Activated CD8-positive, alpha-beta T cell treated with anti-CD3 and anti-CD28 coated beads for 36 hours (primary cell): ENCODE measurements at regions of chr17 and their contacts with region 1.

Region 1: DNA sequence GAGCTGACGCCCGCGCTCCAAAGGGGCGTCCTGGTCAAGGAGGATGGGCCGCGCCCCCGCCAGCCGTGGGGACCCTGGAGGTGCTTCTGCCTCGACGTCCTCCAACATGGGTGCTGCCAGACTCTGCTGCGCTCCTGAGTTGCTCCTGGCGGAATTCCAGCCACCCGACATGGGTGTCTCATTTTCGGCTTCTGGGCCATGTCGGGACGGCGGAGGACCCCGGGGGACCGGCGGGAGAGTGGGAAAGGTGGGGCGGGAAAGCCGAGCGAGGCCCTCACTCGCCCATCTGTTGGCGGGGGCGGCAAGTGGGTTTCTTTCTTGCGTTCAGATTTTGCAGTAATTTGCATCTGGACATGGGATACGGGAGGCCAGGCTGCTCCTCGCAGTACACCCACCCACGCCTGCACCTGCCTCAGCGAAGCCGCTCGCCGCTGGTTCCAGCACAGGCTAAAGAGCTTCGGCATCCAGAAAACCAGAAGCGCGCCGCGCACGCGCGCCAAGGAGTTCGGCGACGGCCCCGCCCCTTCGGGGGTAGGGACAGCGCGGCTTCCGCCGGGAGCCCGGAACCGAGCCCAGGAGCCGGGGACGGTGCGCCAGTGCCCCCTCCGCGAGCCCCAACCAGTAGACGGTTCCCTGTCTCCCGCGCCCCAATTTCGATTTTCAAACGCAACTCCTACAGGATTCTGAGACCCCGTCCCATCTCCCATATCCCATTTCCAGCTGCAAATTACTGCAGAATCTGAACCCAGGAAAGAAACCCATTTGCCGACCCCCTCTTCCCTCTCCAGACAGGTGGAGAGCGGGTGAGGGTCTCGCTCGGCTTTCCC is at the start of gene ARMC7:
- DNase-seq: peak; percentile 91
- ATAC-seq: peak; percentile 84
- H3K4me3 Mint-ChIP-seq: peak within 1 kb of the TSS; percentile 87
- H3K27ac Mint-ChIP-seq: peak within 1 kb of the TSS; percentile 90
- H3K4me1 Mint-ChIP-seq: peaks cover 32% of the 10 kb centered on the region
- H3K27me3 Mint-ChIP-seq: no peaks in the 10 kb centered on the region
- CTCF ChIP-seq: no peak
- total RNA-seq, gene ARMC7: 5.4 TPM

Region 2: GRCh38 chr17:75012346-75013091 is 97.1 kb before region 1 on chr17 and contains the start of gene MRPL58:
- CTCF ChIA-PET with region 1: interaction called, 19 read pairs
- POLR2A ChIA-PET with region 1: interaction called, 3 read pairs
- intact Hi-C with region 1: no loop called
- DNase-seq: peak; percentile 90
- ATAC-seq: peak; percentile 95
- H3K4me3 Mint-ChIP-seq: peak within 1 kb of the TSS; percentile 88
- H3K27ac Mint-ChIP-seq: peak within 1 kb of the TSS; percentile 92
- H3K4me1 Mint-ChIP-seq: peaks cover 33% of the 10 kb centered on the region
- H3K27me3 Mint-ChIP-seq: no peaks in the 10 kb centered on the region
- CTCF ChIP-seq: peak; percentile 51
- total RNA-seq, gene MRPL58: 53.6 to 62.4 TPM

Region 3: GRCh38 chr17:75096082-75096625 is 13.5 kb before region 1 on chr17:
- CTCF ChIA-PET with region 1: interaction called, 14 read pairs
- POLR2A ChIA-PET with region 1: interaction called, 4 read pairs
- intact Hi-C with region 1: no loop called
- DNase-seq: no peak
- ATAC-seq: no peak
- H3K4me3 Mint-ChIP-seq: no peak overlapping the region
- H3K27ac Mint-ChIP-seq: no peak overlapping the region
- H3K4me1 Mint-ChIP-seq: no peaks in the 10 kb centered on the region
- H3K27me3 Mint-ChIP-seq: no peaks in the 10 kb centered on the region
- CTCF ChIP-seq: no peak

Region 4: GRCh38 chr17:75153780-75154194 is 44.2 kb after region 1 on chr17:
- CTCF ChIA-PET with region 1: interaction called, 34 read pairs
- POLR2A ChIA-PET with region 1: interaction called, 5 read pairs
- intact Hi-C with region 1: no loop called
- DNase-seq: peak; percentile 51
- ATAC-seq: no peak
- H3K4me3 Mint-ChIP-seq: peak overlapping the region; percentile 94
- H3K27ac Mint-ChIP-seq: peak overlapping the region; percentile 87
- H3K4me1 Mint-ChIP-seq: peaks cover 32% of the 10 kb centered on the region
- H3K27me3 Mint-ChIP-seq: no peaks in the 10 kb centered on the region
- CTCF ChIP-seq: no peak

Region 5: DNA sequence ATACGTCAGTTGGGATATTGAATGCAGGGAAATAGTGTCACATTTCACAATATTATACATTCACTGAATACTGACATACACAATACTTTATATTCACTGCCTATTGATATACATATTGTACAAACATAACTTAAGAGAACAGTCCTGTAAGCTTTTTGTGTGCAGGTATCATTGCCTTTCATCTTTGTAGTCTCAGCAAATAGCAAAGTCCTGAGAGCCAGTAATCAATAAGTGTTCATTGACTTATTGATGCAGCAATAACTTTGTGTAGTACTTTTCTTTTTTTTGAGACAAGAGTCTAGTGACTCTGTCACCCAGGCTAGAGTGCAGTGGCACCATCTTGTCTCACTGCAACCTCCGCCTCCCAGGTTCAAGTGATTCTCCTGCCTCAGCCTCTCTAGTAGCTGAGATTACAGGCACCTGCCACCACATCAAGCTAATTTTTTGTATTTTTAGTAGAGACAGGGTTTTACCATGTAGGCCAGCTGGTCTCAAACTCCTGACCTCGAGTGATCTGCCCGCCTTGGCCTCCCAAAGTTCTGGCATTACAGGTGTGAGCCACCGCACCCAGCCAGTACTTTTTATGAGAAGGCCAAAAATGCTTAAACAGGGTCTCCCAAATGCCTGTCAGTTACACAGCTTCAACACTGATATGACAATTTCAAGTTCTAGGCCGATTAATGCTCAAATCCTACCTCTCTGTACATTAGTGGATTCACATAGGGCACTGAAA is 90.4 kb after region 1 on chr17:
- CTCF ChIA-PET with region 1: interaction called, 221 read pairs
- POLR2A ChIA-PET with region 1: interaction called, 8 read pairs
- intact Hi-C with region 1: loop called (anchors 5 kb)
- DNase-seq: no peak
- ATAC-seq: no peak
- H3K4me3 Mint-ChIP-seq: no peak overlapping the region
- H3K27ac Mint-ChIP-seq: no peak overlapping the region
- H3K4me1 Mint-ChIP-seq: peaks cover 10% of the 10 kb centered on the region
- H3K27me3 Mint-ChIP-seq: no peaks in the 10 kb centered on the region
- CTCF ChIP-seq: no peak

Region 6: DNA sequence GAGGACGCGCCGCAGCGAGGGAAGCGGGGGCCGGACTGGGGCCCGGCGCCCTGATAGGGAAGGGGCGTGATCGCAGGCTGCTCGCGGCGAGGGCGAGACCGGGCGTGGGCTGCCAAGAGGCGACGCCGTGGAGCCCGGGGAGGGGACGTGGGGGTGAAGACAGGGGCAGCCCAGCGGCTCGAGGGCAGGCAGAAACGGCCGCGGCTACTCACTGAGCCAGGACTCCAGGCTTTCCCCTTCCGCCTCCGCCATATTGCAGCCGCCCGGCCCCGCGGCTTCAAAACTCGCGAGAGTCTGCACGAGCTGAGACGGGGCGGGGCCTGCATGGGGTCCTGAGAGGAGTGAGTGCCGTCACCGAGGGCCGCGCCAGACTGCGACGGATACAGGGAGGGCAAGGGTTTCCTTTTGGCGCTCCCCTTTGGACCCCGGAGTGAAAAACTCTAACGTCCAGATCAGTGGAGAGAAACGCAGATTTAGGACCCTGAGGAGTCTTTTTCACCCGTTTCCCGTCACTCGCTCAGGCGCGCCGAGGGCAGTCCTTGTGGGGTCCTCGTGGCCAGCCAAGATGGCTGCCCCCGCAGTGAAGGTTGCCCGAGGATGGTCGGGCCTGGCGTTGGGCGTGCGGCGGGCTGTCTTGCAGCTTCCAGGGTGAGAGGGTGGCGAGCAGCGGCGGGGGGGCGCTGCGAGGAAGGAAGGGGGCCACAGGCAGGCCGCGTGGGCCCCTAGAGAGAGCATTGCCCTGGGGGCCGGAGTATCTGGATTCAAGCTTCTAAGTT is 151.9 kb after region 1 on chr17 and contains the starts of genes GGA3 and MRPS7:
- CTCF ChIA-PET with region 1: interaction called, 17 read pairs
- POLR2A ChIA-PET with region 1: interaction called, 6 read pairs
- intact Hi-C with region 1: no loop called
- DNase-seq: peak; percentile 97
- ATAC-seq: peak; percentile 96
- H3K4me3 Mint-ChIP-seq: peak within 1 kb of the TSS; percentile 95
- H3K27ac Mint-ChIP-seq: peak within 1 kb of the TSS; percentile 99
- H3K4me1 Mint-ChIP-seq: peaks cover 52% of the 10 kb centered on the region
- H3K27me3 Mint-ChIP-seq: no peaks in the 10 kb centered on the region
- CTCF ChIP-seq: no peak
- total RNA-seq, gene GGA3: 65.5 to 65.8 TPM
- total RNA-seq, gene MRPS7: 76.3 to 80.0 TPM